BJ (cell line): ENCODE measurements at regions of chr5 and their contacts with region 1.

Region 1: DNA sequence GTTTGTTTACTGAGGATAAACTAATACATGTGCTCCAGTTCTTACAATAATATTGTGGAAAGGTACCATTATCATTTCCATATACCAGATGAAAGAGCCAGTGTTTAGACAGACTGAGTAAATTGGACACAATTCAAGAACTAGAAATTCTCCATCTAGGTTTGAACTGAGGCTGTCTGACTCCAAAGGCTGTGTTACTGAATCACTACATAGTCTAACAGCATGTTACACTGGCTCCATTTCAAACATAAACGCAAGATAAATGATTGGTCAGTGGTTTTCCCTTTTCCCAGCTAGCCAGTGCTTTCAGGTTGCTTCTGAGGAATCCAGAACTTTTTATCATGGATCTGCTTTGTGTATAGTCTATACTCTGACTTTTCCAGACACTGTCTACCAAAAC is 8.1 kb downstream of the SPDL1 start:
- DNase-seq: no peak
- H3K4me3 ChIP-seq: no peak overlapping the region
- H3K27me3 ChIP-seq: no peaks in the 10 kb centered on the region
- CTCF ChIP-seq: no peak

Region 2: DNA sequence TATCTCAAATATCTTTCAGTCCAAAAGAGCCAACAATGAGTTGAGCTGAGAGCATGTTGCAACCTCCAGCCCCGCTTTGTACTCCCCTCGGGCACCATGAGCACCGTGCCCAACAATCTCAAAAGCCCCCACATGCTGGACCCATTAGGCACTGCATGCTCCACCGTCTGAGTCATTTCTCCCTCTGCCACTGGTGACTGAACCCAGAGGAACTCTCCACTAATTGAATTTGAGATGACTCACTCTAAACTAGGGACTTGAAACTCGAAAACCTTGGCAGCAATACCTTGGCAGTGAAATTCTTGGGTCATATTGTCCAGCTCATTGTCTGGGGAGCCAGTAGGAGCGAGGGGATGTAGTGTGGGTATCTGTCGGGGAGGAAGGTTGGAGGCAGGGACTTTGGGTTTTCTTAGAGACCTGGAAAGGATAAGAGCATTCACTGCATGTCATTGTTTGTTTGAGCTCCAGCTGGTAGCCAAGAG is 240.8 kb before region 1 on chr5:
- CTCF ChIA-PET with region 1: no interaction called
- POLR2A ChIA-PET with region 1: no interaction called
- DNase-seq: peak; percentile 95
- H3K4me3 ChIP-seq: no peak overlapping the region
- H3K27me3 ChIP-seq: no peaks in the 10 kb centered on the region
- CTCF ChIP-seq: no peak

Region 3: GRCh38 chr5:169563369-169563768 is 28.3 kb before region 1 on chr5:
- CTCF ChIA-PET with region 1: no interaction called
- POLR2A ChIA-PET with region 1: interaction called, 10 read pairs
- DNase-seq: no peak
- H3K4me3 ChIP-seq: no peak overlapping the region
- H3K27me3 ChIP-seq: peaks cover 1% of the 10 kb centered on the region; the same call in 1 of the 2 replicates
- CTCF ChIP-seq: no peak

Region 4: GRCh38 chr5:169656125-169656901 is 64.7 kb after region 1 on chr5:
- CTCF ChIA-PET with region 1: no interaction called
- POLR2A ChIA-PET with region 1: no interaction called
- DNase-seq: no peak
- H3K4me3 ChIP-seq: no peak overlapping the region
- H3K27me3 ChIP-seq: no peaks in the 10 kb centered on the region
- CTCF ChIP-seq: no peak